H1 (cell line): ENCODE measurements at regions of chr22 and their contacts with region 1.

Region 1: GRCh38 chr22:46542011-46542985 is 4.9 kb upstream of the CELSR1 start:
- DNase-seq: peak in 1 of 2 experiments; percentile 90
- H3K4me3 ChIP-seq: no peak overlapping the region
- H3K27ac ChIP-seq: no peak overlapping the region
- H3K4me1 ChIP-seq: peaks cover 0 to 6% (median 2%) of the 10 kb centered on the region in 4 experiments; a peak in 4 of 7 replicates
- H3K27me3 ChIP-seq: peaks cover 4 to 21% (median 20%) of the 10 kb centered on the region in 4 experiments
- CTCF ChIP-seq: peak; percentile 97 to 100 (median 99)
- EP300 ChIP-seq: no peak
- POLR2A ChIP-seq: no peak
- RAD21 ChIP-seq: peak; percentile 98 to 99

Region 2: DNA sequence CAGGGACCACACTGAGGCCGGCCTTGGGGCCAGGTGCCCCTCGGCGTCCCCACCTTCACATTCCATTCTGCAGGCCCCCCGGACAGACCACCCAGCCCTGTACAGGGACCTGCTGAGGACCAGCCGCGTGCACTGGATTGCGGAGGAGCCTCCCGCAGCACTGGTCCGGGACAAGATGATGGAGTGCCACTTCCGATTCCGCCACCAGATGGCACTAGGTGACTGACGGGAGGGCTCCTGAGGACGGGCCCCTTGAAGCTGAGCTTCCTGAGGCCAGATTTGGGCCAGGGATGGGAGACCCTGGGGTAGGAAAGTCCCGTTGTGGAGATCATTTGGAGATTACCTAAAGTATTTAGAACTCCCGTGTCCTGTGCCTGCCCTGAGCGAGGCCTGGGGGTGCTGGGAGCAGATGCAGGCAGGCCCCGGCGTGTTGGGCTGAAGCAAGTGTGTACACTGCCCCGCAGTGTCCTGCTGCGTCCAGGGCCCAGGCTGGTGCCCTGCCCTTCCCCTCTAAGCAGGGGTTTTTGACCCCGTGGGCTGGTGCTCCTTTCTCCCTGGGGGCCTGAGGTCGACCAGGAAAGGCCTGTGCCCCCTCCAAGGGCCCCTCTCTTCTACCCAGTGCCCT is 186.8 kb before region 1 on chr22:
- CTCF ChIA-PET with region 1: interaction called, 60 read pairs
- POLR2A ChIA-PET with region 1: interaction called, 3 read pairs
- DNase-seq: peak in 1 of 2 experiments; percentile 97
- H3K4me3 ChIP-seq: no peak overlapping the region
- H3K27ac ChIP-seq: 0 out of 2 replicates have a peak overlapping the region, but pooled peaks have one; percentile 35
- H3K4me1 ChIP-seq: no peaks in the 10 kb centered on the region
- H3K27me3 ChIP-seq: no peaks in the 10 kb centered on the region
- CTCF ChIP-seq: peak; percentile 91 to 95 (median 92)
- EP300 ChIP-seq: no peak
- POLR2A ChIP-seq: no peak
- RAD21 ChIP-seq: peak; percentile 95 to 98

Region 3: DNA sequence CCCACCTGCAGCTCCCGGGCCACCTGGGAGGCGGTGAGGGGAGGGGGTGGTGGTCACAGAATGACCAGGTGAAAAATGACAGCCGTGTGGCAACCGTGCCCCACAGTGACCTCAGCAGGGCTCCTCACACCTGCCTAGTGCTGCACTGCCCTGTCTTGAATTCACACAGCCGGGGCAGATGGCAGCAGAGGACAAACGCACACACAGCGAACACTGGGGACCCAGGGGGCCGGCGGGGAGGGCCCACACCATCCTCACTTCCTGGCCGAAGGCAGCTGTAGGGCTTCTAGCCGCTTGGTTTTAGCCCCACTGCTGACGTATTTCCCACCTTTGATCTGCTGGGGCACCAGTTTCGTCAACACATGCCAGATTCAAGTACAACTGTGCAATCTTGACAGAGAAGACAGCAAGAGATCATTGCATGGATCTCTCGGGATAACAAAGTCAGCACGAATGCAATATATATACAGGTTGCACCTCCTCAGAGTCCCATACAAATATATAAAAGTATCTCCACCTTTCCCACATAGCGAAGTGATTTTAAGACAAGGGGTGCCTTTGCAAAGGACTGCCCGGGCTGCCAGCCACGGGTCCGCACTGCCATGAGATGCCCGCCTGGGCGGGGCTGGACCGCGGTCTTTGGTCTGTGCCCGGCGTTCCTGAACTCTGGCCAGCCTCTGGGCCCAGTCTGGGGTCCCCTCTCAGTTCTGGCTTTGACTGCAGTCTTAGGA is 179.9 kb before region 1 on chr22:
- CTCF ChIA-PET with region 1: interaction called, 82 read pairs
- POLR2A ChIA-PET with region 1: interaction called, 5 read pairs
- DNase-seq: no peak
- H3K4me3 ChIP-seq: no peak overlapping the region
- H3K27ac ChIP-seq: no peak overlapping the region
- H3K4me1 ChIP-seq: peaks cover 0 to 8% (median 3%) of the 10 kb centered on the region in 4 experiments; a peak in 5 of 7 replicates
- H3K27me3 ChIP-seq: no peaks in the 10 kb centered on the region
- CTCF ChIP-seq: no peak
- EP300 ChIP-seq: no peak
- POLR2A ChIP-seq: no peak
- RAD21 ChIP-seq: no peak

Region 4: DNA sequence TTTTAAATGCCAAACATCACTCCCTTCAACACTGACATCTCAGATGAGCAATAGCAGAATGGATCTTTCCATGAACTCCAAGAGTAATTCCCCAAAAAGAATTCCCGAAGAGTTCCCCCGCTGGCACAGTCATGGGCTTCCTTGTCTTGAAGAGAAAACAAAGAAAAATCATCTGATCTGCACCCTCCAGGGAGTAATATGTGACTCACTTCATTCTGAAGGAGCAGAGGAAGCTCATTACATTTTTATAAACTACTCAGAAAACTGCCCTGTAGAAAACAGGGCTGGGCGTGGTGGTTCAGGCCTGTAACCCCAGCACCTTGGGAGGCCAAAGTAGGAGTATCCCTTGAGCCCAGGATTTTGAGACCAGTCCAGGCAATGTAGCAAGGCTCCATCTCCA is 40.6 kb before region 1 on chr22:
- CTCF ChIA-PET with region 1: interaction called, 10 read pairs
- POLR2A ChIA-PET with region 1: no interaction called
- DNase-seq: no peak
- H3K4me3 ChIP-seq: no peak overlapping the region
- H3K27ac ChIP-seq: no peak overlapping the region
- H3K4me1 ChIP-seq: peaks cover 3 to 22% (median 11%) of the 10 kb centered on the region in 4 experiments
- H3K27me3 ChIP-seq: no peaks in the 10 kb centered on the region
- CTCF ChIP-seq: no peak
- EP300 ChIP-seq: no peak
- POLR2A ChIP-seq: no peak
- RAD21 ChIP-seq: no peak

Region 5: DNA sequence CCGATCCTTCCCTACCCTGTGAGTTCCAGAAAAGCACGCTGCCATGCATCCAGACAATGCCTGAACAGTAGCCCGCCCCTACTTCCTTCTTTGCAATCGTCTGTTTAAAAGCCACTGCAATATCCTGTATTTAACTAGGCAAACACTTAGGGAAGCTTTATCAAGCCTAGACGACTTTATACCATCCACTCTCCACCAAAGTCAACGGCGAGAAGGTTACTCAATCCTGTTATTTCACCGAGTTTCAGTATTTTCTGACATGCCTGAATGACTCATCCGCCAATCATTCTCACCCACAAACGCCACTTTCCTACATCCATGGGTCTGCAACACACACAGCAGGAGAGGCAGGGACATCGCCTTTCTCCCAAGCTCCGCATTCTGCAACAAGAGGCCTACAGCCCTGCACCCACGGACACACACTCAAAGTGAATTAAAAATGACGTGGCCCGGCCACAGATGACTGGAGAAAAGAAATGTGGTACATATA is 14.1 kb before region 1 on chr22:
- CTCF ChIA-PET with region 1: interaction called, 11 read pairs
- POLR2A ChIA-PET with region 1: no interaction called
- DNase-seq: no peak
- H3K4me3 ChIP-seq: no peak overlapping the region
- H3K27ac ChIP-seq: no peak overlapping the region
- H3K4me1 ChIP-seq: no peaks in the 10 kb centered on the region
- H3K27me3 ChIP-seq: no peaks in the 10 kb centered on the region
- CTCF ChIP-seq: no peak
- EP300 ChIP-seq: no peak
- POLR2A ChIP-seq: no peak
- RAD21 ChIP-seq: no peak

Region 6: DNA sequence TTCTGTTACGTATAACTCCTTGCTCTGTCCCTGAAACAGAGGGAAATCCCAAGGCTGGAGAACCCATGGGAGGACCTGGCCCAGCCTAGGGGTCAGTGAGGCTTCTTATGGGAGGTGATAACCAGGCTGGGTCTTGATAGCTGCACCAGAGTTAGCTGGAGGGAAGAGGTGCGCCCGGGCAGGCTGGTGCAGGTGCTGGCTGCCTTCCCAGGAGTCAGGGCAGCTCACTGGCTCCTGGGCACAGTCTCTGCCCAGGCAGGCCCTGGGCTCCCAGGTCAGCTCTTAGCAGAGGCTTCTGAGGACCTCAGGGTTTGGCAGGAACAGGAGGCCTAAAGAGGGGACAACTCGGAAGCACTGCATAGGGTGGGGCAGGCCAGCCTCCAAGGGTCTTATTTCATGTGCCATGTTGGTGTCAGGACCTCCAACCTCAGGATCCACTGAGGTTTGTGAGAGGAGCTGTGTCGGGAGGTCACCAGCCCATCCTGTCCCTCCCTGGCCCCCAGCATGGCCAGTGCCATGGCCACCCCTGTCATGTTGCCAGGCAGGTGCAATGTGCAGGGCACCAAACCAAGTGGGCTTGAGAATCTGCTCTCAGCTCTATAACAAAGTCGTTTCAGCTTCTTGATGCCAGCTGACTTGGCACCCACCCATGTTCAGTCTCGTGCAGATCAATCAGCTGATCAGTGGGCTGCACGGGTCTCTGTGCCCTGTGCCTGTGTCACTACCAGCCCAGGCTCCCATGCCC is 15.6 kb after region 1 on chr22:
- CTCF ChIA-PET with region 1: interaction called, 12 read pairs
- POLR2A ChIA-PET with region 1: interaction called, 9 read pairs
- DNase-seq: no peak
- H3K4me3 ChIP-seq: no peak overlapping the region
- H3K27ac ChIP-seq: no peak overlapping the region
- H3K4me1 ChIP-seq: no peaks in the 10 kb centered on the region; a peak in 1 of 7 replicates
- H3K27me3 ChIP-seq: no peaks in the 10 kb centered on the region; a peak in 2 of 7 replicates
- CTCF ChIP-seq: no peak
- EP300 ChIP-seq: no peak
- POLR2A ChIP-seq: no peak
- RAD21 ChIP-seq: no peak